PC-3 (cell line): ENCODE measurements at regions of chr17 and their contacts with region 1.

Region 1: GRCh38 chr17:67492824-67493517 is 115.9 kb downstream of the PITPNC1 start:
- DNase-seq: no peak
- ATAC-seq: no peak
- H3K4me3 ChIP-seq: no peak overlapping the region
- H3K27ac ChIP-seq: no peak overlapping the region
- H3K4me1 ChIP-seq: no peaks in the 10 kb centered on the region
- H3K27me3 ChIP-seq: no peaks in the 10 kb centered on the region
- CTCF ChIP-seq: no peak

Region 2: DNA sequence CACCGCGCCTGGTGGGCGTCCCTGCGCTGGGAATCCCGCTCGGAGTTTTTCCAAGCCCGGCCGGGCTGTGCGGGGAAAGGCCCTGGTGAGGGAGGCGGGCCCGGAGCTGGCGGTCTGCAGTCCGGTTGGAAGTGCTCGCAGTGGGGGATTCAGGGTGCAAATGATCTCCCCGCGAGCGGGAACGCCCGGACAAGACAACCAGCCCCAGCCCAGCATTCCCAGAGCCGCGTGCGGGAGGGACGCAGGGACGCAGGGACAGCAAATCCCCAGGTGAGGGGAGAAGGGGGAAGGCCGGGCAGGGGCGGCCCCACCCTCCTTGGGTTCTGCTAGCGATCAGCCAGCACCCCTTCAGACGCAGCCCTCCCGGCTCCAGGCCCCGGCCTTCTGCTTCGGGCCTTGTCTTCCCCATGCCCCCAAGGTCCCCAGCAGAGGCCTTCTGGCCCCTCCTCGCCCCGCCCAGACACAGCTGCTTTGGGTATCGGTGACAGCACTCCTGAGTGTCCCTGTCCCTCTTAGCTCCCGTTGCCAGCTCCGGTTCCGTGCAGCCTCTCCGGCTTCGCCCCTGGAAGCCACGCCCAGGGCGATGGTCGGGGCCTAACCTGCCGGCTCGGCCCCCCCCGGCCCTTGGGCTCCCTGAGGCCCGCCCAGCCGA is 704.1 kb after region 1 on chr17:
- CTCF ChIA-PET with region 1: no interaction called
- POLR2A ChIA-PET with region 1: interaction called, 21 read pairs
- intact Hi-C with region 1: no loop called
- DNase-seq: peak; percentile 37
- ATAC-seq: peak; percentile 7; the same call in 1 of the 2 replicates
- H3K4me3 ChIP-seq: peak overlapping the region; percentile 60
- H3K27ac ChIP-seq: no peak overlapping the region
- H3K4me1 ChIP-seq: peaks cover 28% of the 10 kb centered on the region
- H3K27me3 ChIP-seq: peaks cover 56% of the 10 kb centered on the region
- CTCF ChIP-seq: no peak